ENCODE measurements at regions of chr20 and their contacts with region 1.

Region 1: DNA sequence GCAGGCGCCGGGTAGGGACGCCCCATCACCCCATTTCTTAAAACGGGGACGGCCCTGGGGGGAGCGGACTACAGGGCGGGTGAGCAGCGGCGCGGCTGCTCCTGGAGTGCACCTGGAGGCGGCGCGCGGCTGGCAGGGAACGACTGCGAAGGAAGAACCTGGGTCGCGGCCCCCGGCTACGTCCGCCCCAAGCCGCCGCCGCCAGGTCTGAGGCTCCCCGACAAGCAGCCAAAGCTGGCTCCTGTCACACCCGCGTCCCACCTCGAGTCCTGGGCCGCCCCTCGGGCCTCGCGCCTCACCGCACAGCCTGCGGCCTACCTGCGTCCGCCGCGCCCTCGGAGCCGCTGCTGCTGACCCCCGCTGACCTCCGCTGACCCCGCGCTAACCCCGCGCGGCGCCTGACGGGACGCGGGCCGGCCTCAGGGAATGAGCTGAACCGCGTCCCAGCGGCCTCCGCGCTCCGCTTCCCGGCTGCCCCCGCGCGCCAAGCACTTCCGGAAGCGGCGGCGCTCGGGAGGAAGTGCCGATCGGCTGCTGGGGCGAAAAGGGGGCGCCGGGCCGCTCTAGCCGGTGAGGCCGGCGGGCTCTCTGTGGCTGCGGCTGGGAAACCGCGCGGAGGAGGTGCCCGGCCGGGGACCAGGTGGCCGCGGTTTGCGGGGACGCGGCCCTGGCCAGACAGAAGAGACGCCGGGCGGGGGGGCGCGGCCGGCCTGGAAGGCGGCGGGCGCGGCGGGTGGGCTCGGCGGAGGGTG is at the starts of genes ARFRP1 and ZGPAT:
- DNase-seq: peak; percentile 77 to 92 (median 88)
- ATAC-seq: peak; percentile 92
- H3K4me3 ChIP-seq: peak within 1 kb of the TSS; percentile 91
- H3K4me3 Mint-ChIP-seq: peak within 1 kb of the TSS; percentile 86 to 95 (median 90)
- H3K27ac ChIP-seq: peak within 1 kb of the TSS; percentile 81
- H3K27ac Mint-ChIP-seq: peak within 1 kb of the TSS; percentile 82 to 97 (median 87)
- H3K4me1 ChIP-seq: peaks cover 22 to 30% of the 10 kb centered on the region in 2 donors
- H3K4me1 Mint-ChIP-seq: peaks cover 33 to 61% (median 46%) of the 10 kb centered on the region in 7 donors
- H3K27me3 ChIP-seq: no peaks in the 10 kb centered on the region
- H3K27me3 Mint-ChIP-seq: no peaks in the 10 kb centered on the region
- total RNA-seq, gene ARFRP1: 55.4 to 92.1 (median 66.2) TPM
- total RNA-seq, gene ZGPAT: 42.9 to 49.9 (median 45.4) TPM

Region 2: GRCh38 chr20:63627129-63627750 is 80.5 kb before region 1 on chr20:
- CTCF ChIA-PET with region 1: no interaction called
- POLR2A ChIA-PET with region 1: interaction called, 13 read pairs
- intact Hi-C with region 1: loop called in 1 of 2 experiments (anchors 5 kb)
- DNase-seq: peak; percentile 74 to 99 (median 97)
- ATAC-seq: peak; percentile 93
- H3K4me3 ChIP-seq: peak overlapping the region; percentile 96
- H3K4me3 Mint-ChIP-seq: peak overlapping the region; percentile 93 to 99 (median 98)
- H3K27ac ChIP-seq: peak overlapping the region; percentile 85
- H3K27ac Mint-ChIP-seq: peak overlapping the region; percentile 79 to 98 (median 95)
- H3K4me1 ChIP-seq: peaks cover 29 to 40% of the 10 kb centered on the region in 2 donors
- H3K4me1 Mint-ChIP-seq: peaks cover 28 to 64% (median 42%) of the 10 kb centered on the region in 7 donors
- H3K27me3 ChIP-seq: no peaks in the 10 kb centered on the region
- H3K27me3 Mint-ChIP-seq: no peaks in the 10 kb centered on the region

Region 3: GRCh38 chr20:63739130-63740069 is 31.7 kb after region 1 on chr20 and contains the start of gene SLC2A4RG:
- CTCF ChIA-PET with region 1: interaction called, 27 read pairs
- POLR2A ChIA-PET with region 1: interaction called, 137 read pairs
- intact Hi-C with region 1: loop called (anchors 1 to 5 kb)
- DNase-seq: peak; percentile 49 to 86 (median 69)
- ATAC-seq: peak; percentile 62
- H3K4me3 ChIP-seq: peak within 1 kb of the TSS; percentile 99
- H3K4me3 Mint-ChIP-seq: peak within 1 kb of the TSS; percentile 33 to 92 (median 80)
- H3K27ac ChIP-seq: peak within 1 kb of the TSS; percentile 71
- H3K27ac Mint-ChIP-seq: peak within 1 kb of the TSS in 1 of 9 donors; percentile 38
- H3K4me1 ChIP-seq: peaks cover 21 to 29% of the 10 kb centered on the region in 2 donors
- H3K4me1 Mint-ChIP-seq: peaks cover 7 to 20% (median 16%) of the 10 kb centered on the region in 7 donors
- H3K27me3 ChIP-seq: no peaks in the 10 kb centered on the region
- H3K27me3 Mint-ChIP-seq: no peaks in the 10 kb centered on the region
- total RNA-seq, gene SLC2A4RG: 88.7 to 136 (median 111) TPM

Region 4: DNA sequence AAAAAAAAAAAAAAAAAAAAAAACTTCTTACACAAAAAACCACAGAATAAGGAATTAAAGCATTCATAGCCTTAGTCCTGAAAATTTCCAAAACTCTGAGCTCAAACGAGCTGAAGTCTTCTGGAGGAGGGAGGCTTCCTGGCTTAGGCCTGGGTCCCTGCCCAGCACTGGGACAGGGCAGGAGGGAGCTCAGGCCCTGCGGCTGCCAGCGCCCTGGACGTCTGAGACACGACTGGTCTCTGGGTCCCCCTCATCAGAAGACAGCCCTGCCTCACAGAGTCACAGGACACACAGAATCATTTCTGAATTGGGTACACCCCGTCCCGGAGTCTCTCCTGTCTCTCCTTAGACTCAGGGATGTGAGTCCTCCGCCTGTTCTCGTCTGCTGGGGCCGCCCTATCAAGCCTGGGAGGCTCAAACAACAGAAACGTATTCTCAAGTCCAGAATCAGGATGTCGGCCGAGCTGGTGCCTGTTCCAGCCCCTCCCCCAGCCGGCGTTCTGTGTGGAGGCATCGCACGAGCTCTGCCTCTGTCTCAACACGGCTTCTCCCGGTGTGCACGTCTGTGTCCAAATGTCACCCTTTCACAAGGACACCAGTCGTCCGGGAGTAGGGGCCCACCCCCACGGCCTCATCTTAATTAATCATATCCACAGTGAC is 83.9 kb after region 1 on chr20:
- CTCF ChIA-PET with region 1: interaction called, 4 read pairs
- POLR2A ChIA-PET with region 1: interaction called, 4 read pairs
- intact Hi-C with region 1: loop called (anchors 1 kb)
- DNase-seq: no peak
- ATAC-seq: no peak
- H3K4me3 ChIP-seq: no peak overlapping the region
- H3K4me3 Mint-ChIP-seq: no peak overlapping the region
- H3K27ac ChIP-seq: no peak overlapping the region
- H3K27ac Mint-ChIP-seq: no peak overlapping the region
- H3K4me1 ChIP-seq: no peaks in the 10 kb centered on the region
- H3K4me1 Mint-ChIP-seq: peaks cover 0 to 7% (median 2%) of the 10 kb centered on the region in 7 donors
- H3K27me3 ChIP-seq: no peaks in the 10 kb centered on the region
- H3K27me3 Mint-ChIP-seq: peaks cover 0 to 18% (median 0%) of the 10 kb centered on the region in 5 donors

Region 5: DNA sequence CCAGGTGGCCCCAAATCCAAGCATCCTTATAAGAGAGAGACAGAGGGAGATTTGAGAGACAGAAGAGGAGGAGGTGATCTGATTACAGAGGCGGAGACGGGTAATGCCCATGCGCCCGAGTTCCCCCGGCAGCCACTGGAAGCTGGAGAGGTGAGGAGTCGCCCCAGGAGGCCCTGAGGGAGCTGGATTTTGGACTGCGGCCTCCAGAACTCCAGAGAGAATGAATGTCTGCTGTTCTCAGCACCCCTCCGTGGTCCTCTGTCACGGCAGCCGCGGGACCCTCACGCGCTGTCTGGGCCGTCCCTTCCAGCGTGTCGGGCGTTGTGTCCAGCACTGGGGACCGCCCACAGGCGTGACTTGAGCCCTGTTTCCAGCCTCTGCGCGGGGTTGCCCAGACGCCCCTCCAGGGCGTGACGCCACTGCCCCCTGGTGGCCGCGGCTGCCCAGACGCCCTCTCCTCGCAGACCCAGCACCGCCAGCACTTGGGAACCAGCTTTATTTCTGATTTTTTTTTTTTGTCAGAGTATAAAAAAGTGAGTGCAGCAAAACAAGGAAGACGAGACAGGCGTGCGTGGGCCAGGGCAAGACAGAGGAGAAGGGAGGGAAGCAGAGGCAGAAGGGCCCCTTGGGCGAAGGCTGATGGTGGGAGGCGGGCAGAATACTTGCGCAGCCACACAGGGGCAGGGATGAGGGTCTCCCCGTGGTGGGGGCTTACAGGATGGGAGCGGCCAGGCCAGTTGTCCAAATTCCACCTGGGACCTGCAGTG is 266.1 kb after region 1 on chr20:
- CTCF ChIA-PET with region 1: no interaction called
- POLR2A ChIA-PET with region 1: no interaction called
- intact Hi-C with region 1: loop called (anchors 2 to 5 kb)
- DNase-seq: peak; percentile 59 to 89 (median 78)
- ATAC-seq: peak; percentile 81
- H3K4me3 ChIP-seq: no peak overlapping the region
- H3K4me3 Mint-ChIP-seq: peak overlapping the region in 5 of 10 donors; percentile 7 to 71 (median 36)
- H3K27ac ChIP-seq: peak overlapping the region; percentile 35
- H3K27ac Mint-ChIP-seq: peak overlapping the region; percentile 16 to 88 (median 71)
- H3K4me1 ChIP-seq: peaks cover 16 to 36% of the 10 kb centered on the region in 2 donors
- H3K4me1 Mint-ChIP-seq: peaks cover 34 to 63% (median 54%) of the 10 kb centered on the region in 7 donors
- H3K27me3 ChIP-seq: no peaks in the 10 kb centered on the region
- H3K27me3 Mint-ChIP-seq: peaks cover 0 to 2% (median 0%) of the 10 kb centered on the region in 5 donors

Measured in naive thymus-derived CD4-positive, alpha-beta T cell (primary cell).